Naive thymus-derived CD4-positive, alpha-beta T cell (primary cell): ENCODE measurements at regions of chr12 and their contacts with region 1.

Region 1: GRCh38 chr12:39587225-39587624 is 32.4 kb downstream of the ABCD2 start:
- DNase-seq: peak in 7 of 9 donors; percentile 10 to 56 (median 31)
- ATAC-seq: peak; percentile 66
- H3K4me3 ChIP-seq: no peak overlapping the region
- H3K4me3 Mint-ChIP-seq: no peak overlapping the region
- H3K27ac ChIP-seq: no peak overlapping the region
- H3K27ac Mint-ChIP-seq: no peak overlapping the region
- H3K4me1 ChIP-seq: no peaks in the 10 kb centered on the region
- H3K4me1 Mint-ChIP-seq: peaks cover 0 to 17% (median 9%) of the 10 kb centered on the region in 7 donors
- H3K27me3 ChIP-seq: no peaks in the 10 kb centered on the region
- H3K27me3 Mint-ChIP-seq: no peaks in the 10 kb centered on the region

Region 2: DNA sequence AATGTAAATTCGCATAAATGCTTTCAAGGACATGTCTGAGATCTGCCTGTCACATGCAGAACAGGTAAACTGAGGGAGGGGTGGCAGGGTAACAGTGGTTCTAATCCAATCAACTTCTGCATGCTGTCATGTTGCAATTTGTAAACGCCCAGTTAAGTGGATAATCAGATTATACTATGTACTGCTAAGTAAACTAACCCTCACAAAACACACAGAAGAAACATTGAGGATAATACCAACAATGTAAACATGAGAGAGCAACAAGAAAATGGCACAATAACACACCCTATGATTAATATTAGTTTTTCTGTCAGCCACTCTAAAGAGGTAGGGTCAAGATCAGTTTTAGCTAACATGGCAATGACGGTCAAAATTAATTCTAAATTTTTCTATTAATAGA is 268.0 kb before region 1 on chr12:
- CTCF ChIA-PET with region 1: no interaction called
- POLR2A ChIA-PET with region 1: no interaction called
- intact Hi-C with region 1: loop called in 1 of 2 experiments (anchors 5 kb)
- DNase-seq: no peak
- ATAC-seq: no peak
- H3K4me3 ChIP-seq: no peak overlapping the region
- H3K4me3 Mint-ChIP-seq: no peak overlapping the region
- H3K27ac ChIP-seq: no peak overlapping the region
- H3K27ac Mint-ChIP-seq: no peak overlapping the region
- H3K4me1 ChIP-seq: no peaks in the 10 kb centered on the region
- H3K4me1 Mint-ChIP-seq: peaks cover 0 to 5% (median 0%) of the 10 kb centered on the region in 7 donors
- H3K27me3 ChIP-seq: no peaks in the 10 kb centered on the region
- H3K27me3 Mint-ChIP-seq: no peaks in the 10 kb centered on the region

Region 3: DNA sequence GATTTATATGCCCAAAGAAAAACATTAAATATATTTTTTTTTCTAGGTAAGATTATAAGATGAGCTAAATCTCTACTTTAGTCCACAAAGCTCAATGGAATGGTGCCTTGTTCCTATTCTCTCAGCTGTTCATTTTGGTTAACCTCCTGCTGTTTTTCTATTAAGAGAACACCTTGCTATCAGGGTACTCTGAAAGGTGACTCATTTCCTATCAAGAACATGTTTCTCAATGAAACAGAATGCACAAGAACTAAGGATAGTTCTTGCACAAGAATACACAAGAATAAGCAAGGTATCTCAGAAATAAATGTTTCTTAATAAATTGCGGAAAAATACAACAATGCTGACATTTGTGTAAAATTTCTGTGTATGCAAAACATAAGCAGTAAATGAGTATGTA is 18.3 kb after region 1 on chr12:
- CTCF ChIA-PET with region 1: interaction called, 7 read pairs
- POLR2A ChIA-PET with region 1: no interaction called
- intact Hi-C with region 1: loop called in 1 of 2 experiments (anchors 2 kb)
- DNase-seq: no peak
- ATAC-seq: no peak
- H3K4me3 ChIP-seq: no peak overlapping the region
- H3K4me3 Mint-ChIP-seq: no peak overlapping the region
- H3K27ac ChIP-seq: no peak overlapping the region
- H3K27ac Mint-ChIP-seq: peak overlapping the region in 4 of 9 donors; percentile 7 to 73 (median 40)
- H3K4me1 ChIP-seq: peaks cover 0 to 5% of the 10 kb centered on the region in 2 donors
- H3K4me1 Mint-ChIP-seq: peaks cover 3 to 54% (median 34%) of the 10 kb centered on the region in 7 donors
- H3K27me3 ChIP-seq: no peaks in the 10 kb centered on the region
- H3K27me3 Mint-ChIP-seq: no peaks in the 10 kb centered on the region

Region 4: DNA sequence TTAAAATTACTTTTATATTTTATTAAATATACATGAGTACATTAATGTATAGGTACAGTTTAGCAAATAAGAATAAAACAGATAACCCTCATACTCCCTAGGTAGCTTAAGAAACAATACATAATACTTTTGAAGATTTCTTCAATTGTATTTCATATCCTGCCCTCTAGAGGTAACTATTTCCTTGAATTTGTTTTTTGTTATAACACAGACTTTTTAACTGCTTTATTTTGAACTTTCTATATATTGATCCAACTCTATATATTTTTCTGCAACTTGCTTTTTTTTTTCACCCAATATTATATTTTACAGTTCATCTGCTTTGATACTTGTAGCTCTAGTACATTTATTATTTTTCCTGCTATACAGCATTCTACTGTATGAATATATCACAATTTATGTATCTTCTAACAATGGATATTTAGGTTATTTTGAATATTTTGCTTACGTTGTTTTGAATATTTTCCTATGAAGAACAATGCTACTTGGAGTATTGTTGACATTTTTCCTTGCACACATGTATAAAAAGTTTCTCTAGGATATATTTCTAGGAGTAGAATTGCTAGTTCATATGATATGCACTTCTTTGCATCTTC is 105.1 kb after region 1 on chr12:
- CTCF ChIA-PET with region 1: interaction called, 27 read pairs
- POLR2A ChIA-PET with region 1: no interaction called
- intact Hi-C with region 1: loop called (anchors 1 kb)
- DNase-seq: peak in 5 of 9 donors; percentile 29 to 47 (median 43)
- ATAC-seq: peak; percentile 64
- H3K4me3 ChIP-seq: no peak overlapping the region
- H3K4me3 Mint-ChIP-seq: peak overlapping the region in 1 of 10 donors; percentile 15
- H3K27ac ChIP-seq: no peak overlapping the region
- H3K27ac Mint-ChIP-seq: no peak overlapping the region
- H3K4me1 ChIP-seq: peaks cover 0 to 3% of the 10 kb centered on the region in 2 donors
- H3K4me1 Mint-ChIP-seq: peaks cover 0 to 7% (median 5%) of the 10 kb centered on the region in 7 donors
- H3K27me3 ChIP-seq: no peaks in the 10 kb centered on the region
- H3K27me3 Mint-ChIP-seq: peaks cover 0 to 12% (median 8%) of the 10 kb centered on the region in 5 donors

Region 5: GRCh38 chr12:39764944-39765560 is 177.8 kb after region 1 on chr12:
- CTCF ChIA-PET with region 1: no interaction called
- POLR2A ChIA-PET with region 1: no interaction called
- intact Hi-C with region 1: loop called in 1 of 2 experiments (anchors 2 kb)
- DNase-seq: peak in 4 of 9 donors; percentile 2 to 22 (median 8)
- ATAC-seq: peak; percentile 51
- H3K4me3 ChIP-seq: no peak overlapping the region
- H3K4me3 Mint-ChIP-seq: no peak overlapping the region
- H3K27ac ChIP-seq: no peak overlapping the region
- H3K27ac Mint-ChIP-seq: no peak overlapping the region
- H3K4me1 ChIP-seq: no peaks in the 10 kb centered on the region
- H3K4me1 Mint-ChIP-seq: no peaks in the 10 kb centered on the region
- H3K27me3 ChIP-seq: no peaks in the 10 kb centered on the region
- H3K27me3 Mint-ChIP-seq: no peaks in the 10 kb centered on the region

Region 6: GRCh38 chr12:39990122-39991101 is 403.2 kb after region 1 on chr12:
- CTCF ChIA-PET with region 1: interaction called, 7 read pairs
- POLR2A ChIA-PET with region 1: no interaction called
- intact Hi-C with region 1: loop called in 1 of 2 experiments (anchors 1 kb)
- DNase-seq: peak; percentile 4 to 51 (median 42)
- ATAC-seq: peak; percentile 89
- H3K4me3 ChIP-seq: no peak overlapping the region
- H3K4me3 Mint-ChIP-seq: no peak overlapping the region
- H3K27ac ChIP-seq: no peak overlapping the region
- H3K27ac Mint-ChIP-seq: no peak overlapping the region
- H3K4me1 ChIP-seq: no peaks in the 10 kb centered on the region
- H3K4me1 Mint-ChIP-seq: peaks cover 0 to 7% (median 6%) of the 10 kb centered on the region in 7 donors
- H3K27me3 ChIP-seq: no peaks in the 10 kb centered on the region
- H3K27me3 Mint-ChIP-seq: no peaks in the 10 kb centered on the region

Region 7: GRCh38 chr12:40286583-40286982 is 699.4 kb after region 1 on chr12:
- CTCF ChIA-PET with region 1: no interaction called
- POLR2A ChIA-PET with region 1: no interaction called
- intact Hi-C with region 1: no loop called
- DNase-seq: no peak
- ATAC-seq: no peak
- H3K4me3 ChIP-seq: no peak overlapping the region
- H3K4me3 Mint-ChIP-seq: no peak overlapping the region
- H3K27ac ChIP-seq: no peak overlapping the region
- H3K27ac Mint-ChIP-seq: no peak overlapping the region
- H3K4me1 ChIP-seq: no peaks in the 10 kb centered on the region
- H3K4me1 Mint-ChIP-seq: no peaks in the 10 kb centered on the region
- H3K27me3 ChIP-seq: no peaks in the 10 kb centered on the region
- H3K27me3 Mint-ChIP-seq: peaks cover 0 to 5% (median 0%) of the 10 kb centered on the region in 5 donors